ENCODE measurements at regions of chr20 and their contacts with region 1.

Region 1: GRCh38 chr20:50189681-50190582 is 698 bp upstream of the CEBPB start:
- DNase-seq: peak; percentile 90
- H3K4me3 ChIP-seq: peak overlapping the region; percentile 87 to 95 (median 89)
- H3K27ac ChIP-seq: peak overlapping the region; percentile 99 to 100
- H3K4me1 ChIP-seq: peaks cover 0 to 7% of the 10 kb centered on the region in 2 donors
- H3K27me3 ChIP-seq: no peaks in the 10 kb centered on the region
- CTCF ChIP-seq: peak; percentile 67 to 92 (median 92)
- POLR2A ChIP-seq: no peak

Region 2: DNA sequence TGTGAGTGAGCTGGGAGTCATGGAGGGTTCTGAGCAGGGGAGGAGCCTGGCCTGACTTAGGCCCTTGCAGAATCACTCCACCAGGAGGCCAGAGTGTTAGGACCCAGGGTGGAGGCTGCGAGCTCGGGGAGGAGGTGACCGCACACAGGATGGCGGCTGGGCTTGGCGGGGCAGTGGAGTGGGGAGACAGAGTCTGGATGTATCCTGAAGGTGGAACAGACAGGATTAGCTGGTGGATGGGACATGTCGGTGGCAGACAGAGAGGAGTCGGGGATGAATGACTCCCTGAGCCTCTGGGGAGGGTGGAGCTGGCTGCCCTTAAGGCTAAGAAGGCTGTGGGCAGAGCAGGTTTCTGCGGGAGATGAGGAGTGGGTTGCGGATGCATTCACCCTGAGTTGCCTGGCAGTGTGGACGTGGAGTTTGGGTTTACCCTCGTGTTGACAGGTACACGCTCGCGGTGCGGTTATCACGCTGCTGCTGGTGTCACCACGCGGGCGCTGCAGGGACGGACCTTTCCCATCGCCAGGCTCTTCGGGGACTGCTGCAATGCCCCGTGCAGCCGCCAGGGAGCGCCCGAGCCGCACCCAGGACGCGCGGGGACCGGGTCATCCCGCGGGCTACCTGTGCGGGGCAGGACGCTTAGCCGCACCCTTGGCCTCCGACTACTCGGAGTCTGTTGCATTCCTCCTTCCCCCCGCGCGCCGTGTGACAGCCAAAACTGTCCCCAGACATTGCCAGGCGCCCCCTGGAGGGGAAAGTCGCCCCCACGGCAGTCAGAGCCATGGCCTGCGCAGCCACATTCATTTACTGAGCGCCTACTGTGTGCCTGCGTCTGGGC is 579.0 kb before region 1 on chr20:
- intact Hi-C with region 1: no loop called
- DNase-seq: peak; percentile 63 to 79
- H3K4me3 ChIP-seq: peak overlapping the region in 2 of 3 donors; percentile 5 to 32
- H3K27ac ChIP-seq: no peak overlapping the region
- H3K4me1 ChIP-seq: no peaks in the 10 kb centered on the region
- H3K27me3 ChIP-seq: no peaks in the 10 kb centered on the region
- CTCF ChIP-seq: peak; percentile 92 to 100 (median 99)
- POLR2A ChIP-seq: no peak

Region 3: DNA sequence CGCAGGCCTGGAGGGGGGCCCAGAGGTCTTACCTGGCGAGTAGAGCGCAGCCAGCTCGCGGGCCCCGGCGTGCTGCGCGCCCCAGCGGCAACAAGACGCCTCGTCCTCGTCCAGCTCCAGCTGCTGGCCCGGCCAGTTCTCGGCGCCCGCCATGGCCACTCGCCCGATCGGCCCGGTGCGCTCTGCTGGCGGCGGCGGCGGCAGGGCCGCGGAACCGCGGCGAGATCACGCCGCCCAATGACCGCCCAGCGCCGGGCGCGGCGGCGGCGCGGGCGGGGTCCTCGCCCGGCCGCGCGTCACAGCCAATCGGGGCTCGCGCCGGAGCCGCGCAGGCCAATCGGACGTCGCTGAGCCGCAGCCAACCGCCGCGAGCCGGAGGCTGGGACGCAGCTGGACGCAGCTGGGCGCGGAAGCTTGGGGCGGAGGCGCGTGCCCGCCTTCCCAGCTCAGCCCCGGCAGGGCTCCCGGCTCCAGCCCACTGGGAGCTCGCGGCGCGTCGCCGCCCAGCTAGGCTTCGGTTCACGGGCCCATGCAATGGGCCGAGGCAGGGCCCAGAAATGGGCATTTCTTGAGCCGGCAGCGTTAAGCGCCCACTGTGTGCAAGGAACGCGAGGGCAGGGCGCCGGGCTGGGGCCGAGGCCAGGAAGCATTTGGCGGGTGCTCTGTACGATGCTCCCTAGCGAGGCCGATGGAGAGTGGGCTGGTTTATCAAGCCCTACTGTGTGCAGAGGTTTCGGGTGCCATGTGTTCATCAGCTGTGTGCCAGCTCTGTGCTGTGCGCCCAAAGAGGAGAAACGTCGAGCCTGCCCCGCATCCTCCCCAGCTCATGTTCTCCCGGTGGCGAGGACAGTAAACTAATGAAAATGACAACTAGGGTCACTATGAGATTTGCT is 36.2 kb before region 1 on chr20 and contains the start of gene PEDS1:
- intact Hi-C with region 1: no loop called
- DNase-seq: peak; percentile 86 to 90
- H3K4me3 ChIP-seq: peak within 1 kb of the TSS; percentile 82 to 95 (median 89)
- H3K27ac ChIP-seq: peak within 1 kb of the TSS; percentile 83 to 90
- H3K4me1 ChIP-seq: peaks cover 5 to 12% of the 10 kb centered on the region in 2 donors
- H3K27me3 ChIP-seq: no peaks in the 10 kb centered on the region
- CTCF ChIP-seq: no peak
- POLR2A ChIP-seq: peak; percentile 26
- total RNA-seq, gene PEDS1: 12.9 to 29.4 (median 18.0) TPM

Region 4: GRCh38 chr20:50305636-50306477 is 115.9 kb after region 1 on chr20:
- intact Hi-C with region 1: loop called (anchors 2 kb)
- DNase-seq: no peak
- H3K4me3 ChIP-seq: peak overlapping the region in 1 of 3 donors; percentile 29
- H3K27ac ChIP-seq: peak overlapping the region; percentile 91 to 96
- H3K4me1 ChIP-seq: peaks cover 20 to 40% of the 10 kb centered on the region in 2 donors
- H3K27me3 ChIP-seq: no peaks in the 10 kb centered on the region
- CTCF ChIP-seq: peak in 2 of 3 donors; percentile 29 to 37
- POLR2A ChIP-seq: peak; percentile 28

Region 5: DNA sequence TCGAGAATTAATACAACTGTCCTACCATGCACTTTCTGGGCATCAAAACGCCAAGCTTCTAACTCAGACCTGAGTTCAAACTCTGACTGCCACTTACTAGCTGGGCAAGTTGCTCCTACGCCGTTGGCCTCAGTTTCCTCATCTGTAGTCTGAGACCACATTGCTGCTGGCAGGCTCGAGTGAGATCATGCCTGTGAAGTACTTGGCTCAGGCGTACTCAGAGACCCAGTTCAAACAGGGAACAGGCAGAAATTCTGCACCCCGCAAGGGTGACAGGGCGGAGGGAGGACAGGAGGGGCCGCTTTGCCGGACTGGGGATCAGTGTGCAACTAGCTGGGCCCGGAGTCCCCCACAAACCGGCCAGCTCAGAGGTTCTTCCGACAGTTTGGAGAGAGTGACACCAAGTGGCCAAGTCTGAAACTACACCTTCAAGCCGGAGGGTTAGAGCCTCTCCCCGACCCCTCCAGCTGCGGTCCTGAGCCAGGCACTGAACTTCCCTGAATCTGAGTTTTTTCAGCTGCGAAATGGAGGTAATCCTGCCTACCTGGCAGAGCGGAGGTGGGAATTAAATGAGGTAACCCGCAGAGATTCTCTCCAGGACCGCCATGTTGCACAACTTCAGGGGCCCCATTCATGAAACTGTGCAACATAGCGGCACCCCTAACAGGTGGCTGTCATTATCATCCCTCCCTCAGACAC is 274.2 kb after region 1 on chr20:
- intact Hi-C with region 1: loop called (anchors 2 kb)
- DNase-seq: peak in 1 of 2 donors; percentile 50
- H3K4me3 ChIP-seq: peak overlapping the region in 1 of 3 donors; percentile 25
- H3K27ac ChIP-seq: no peak overlapping the region
- H3K4me1 ChIP-seq: peaks cover 3 to 9% of the 10 kb centered on the region in 2 donors
- H3K27me3 ChIP-seq: no peaks in the 10 kb centered on the region
- CTCF ChIP-seq: peak; percentile 80 to 86 (median 80)
- POLR2A ChIP-seq: no peak

Region 6: DNA sequence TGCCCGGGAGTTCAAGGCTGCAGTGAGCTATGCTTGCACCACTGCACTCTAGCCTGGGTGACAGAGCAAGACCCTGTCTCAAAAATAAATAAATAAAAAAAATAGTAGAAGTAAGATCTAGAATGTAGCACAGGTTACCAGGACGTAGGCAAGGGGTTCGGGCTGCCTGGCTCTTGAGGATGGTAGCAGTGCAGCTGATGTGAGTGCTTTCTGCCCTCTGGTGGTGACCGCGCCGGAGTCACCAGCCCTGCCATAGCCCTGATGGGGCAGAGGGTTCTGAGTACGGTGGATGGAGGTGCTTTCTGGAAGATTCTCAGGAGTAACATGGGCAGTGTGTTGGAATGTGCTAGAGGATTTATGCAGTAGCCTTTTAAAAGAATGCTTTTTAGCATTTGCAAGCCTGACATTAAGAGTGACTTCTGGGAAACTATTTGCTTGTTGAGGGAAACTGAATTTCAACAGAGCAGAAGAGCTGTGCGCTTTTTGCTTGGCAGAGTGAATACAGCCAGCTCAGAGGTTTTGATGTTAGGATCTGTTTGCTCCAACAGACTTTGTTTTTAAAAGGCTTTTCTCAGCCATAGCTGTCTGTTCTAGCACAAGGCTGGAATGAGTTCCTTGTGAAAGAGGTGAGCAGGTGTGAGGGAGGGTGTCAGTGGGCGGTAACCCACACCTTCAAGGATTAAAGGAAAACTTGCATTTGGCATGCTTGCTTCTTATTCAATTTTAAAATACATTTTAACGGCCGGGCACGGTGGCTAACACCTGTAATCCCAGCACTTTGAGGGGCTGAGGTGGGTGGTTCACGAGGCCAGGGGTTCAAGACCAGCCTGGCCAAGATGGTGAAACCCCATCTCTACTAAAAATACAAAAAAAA is 386.2 kb after region 1 on chr20:
- intact Hi-C with region 1: loop called (anchors 5 kb)
- DNase-seq: no peak
- H3K4me3 ChIP-seq: no peak overlapping the region
- H3K27ac ChIP-seq: no peak overlapping the region
- H3K4me1 ChIP-seq: peaks cover 0 to 28% of the 10 kb centered on the region in 2 donors
- H3K27me3 ChIP-seq: no peaks in the 10 kb centered on the region
- CTCF ChIP-seq: peak in 2 of 3 donors; percentile 48 to 63
- POLR2A ChIP-seq: no peak

Measured in breast epithelium (tissue), 4 donors.